MCF 10A (cell line): ENCODE measurements at regions of chr3 and their contacts with region 1.

Region 1: GRCh38 chr3:43769471-43770425 is 79.0 kb downstream of the ABHD5 start:
- DNase-seq: peak; percentile 98
- H3K4me3 Mint-ChIP-seq: peak overlapping the region; percentile 58
- H3K27ac Mint-ChIP-seq: no peak overlapping the region
- H3K4me1 Mint-ChIP-seq: peaks cover 56% of the 10 kb centered on the region
- H3K27me3 Mint-ChIP-seq: no peaks in the 10 kb centered on the region
- CTCF ChIP-seq: peak; percentile 93

Region 2: GRCh38 chr3:43707998-43708397 is 61.8 kb before region 1 on chr3:
- CTCF ChIA-PET with region 1: no interaction called
- POLR2A ChIA-PET with region 1: interaction called, 13 read pairs
- intact Hi-C with region 1: loop called (anchors 5 kb)
- DNase-seq: peak; percentile 95
- H3K4me3 Mint-ChIP-seq: peak overlapping the region; percentile 55
- H3K27ac Mint-ChIP-seq: peak overlapping the region; percentile 81
- H3K4me1 Mint-ChIP-seq: peaks cover 22% of the 10 kb centered on the region
- H3K27me3 Mint-ChIP-seq: no peaks in the 10 kb centered on the region
- CTCF ChIP-seq: no peak

Region 3: GRCh38 chr3:43794776-43795175 is 25.0 kb after region 1 on chr3:
- CTCF ChIA-PET with region 1: interaction called, 5 read pairs
- POLR2A ChIA-PET with region 1: interaction called, 3 read pairs
- intact Hi-C with region 1: loop called (anchors 2 kb)
- DNase-seq: peak; percentile 61
- H3K4me3 Mint-ChIP-seq: no peak overlapping the region
- H3K27ac Mint-ChIP-seq: peak overlapping the region; percentile 7
- H3K4me1 Mint-ChIP-seq: peaks cover 10% of the 10 kb centered on the region
- H3K27me3 Mint-ChIP-seq: no peaks in the 10 kb centered on the region
- CTCF ChIP-seq: no peak

Region 4: GRCh38 chr3:43870120-43870519 is 100.4 kb after region 1 on chr3:
- CTCF ChIA-PET with region 1: interaction called, 4 read pairs
- POLR2A ChIA-PET with region 1: no interaction called
- intact Hi-C with region 1: loop called (anchors 5 kb)
- DNase-seq: peak; percentile 81
- H3K4me3 Mint-ChIP-seq: no peak overlapping the region
- H3K27ac Mint-ChIP-seq: peak overlapping the region; percentile 49
- H3K4me1 Mint-ChIP-seq: peaks cover 66% of the 10 kb centered on the region
- H3K27me3 Mint-ChIP-seq: no peaks in the 10 kb centered on the region
- CTCF ChIP-seq: no peak

Region 5: GRCh38 chr3:43998836-43999727 is 229.3 kb after region 1 on chr3:
- CTCF ChIA-PET with region 1: interaction called, 3 read pairs
- POLR2A ChIA-PET with region 1: no interaction called
- intact Hi-C with region 1: loop called (anchors 1 kb)
- DNase-seq: peak; percentile 69
- H3K4me3 Mint-ChIP-seq: peak overlapping the region; percentile 75
- H3K27ac Mint-ChIP-seq: no peak overlapping the region
- H3K4me1 Mint-ChIP-seq: peaks cover 29% of the 10 kb centered on the region
- H3K27me3 Mint-ChIP-seq: peaks cover 32% of the 10 kb centered on the region
- CTCF ChIP-seq: no peak

Region 6: DNA sequence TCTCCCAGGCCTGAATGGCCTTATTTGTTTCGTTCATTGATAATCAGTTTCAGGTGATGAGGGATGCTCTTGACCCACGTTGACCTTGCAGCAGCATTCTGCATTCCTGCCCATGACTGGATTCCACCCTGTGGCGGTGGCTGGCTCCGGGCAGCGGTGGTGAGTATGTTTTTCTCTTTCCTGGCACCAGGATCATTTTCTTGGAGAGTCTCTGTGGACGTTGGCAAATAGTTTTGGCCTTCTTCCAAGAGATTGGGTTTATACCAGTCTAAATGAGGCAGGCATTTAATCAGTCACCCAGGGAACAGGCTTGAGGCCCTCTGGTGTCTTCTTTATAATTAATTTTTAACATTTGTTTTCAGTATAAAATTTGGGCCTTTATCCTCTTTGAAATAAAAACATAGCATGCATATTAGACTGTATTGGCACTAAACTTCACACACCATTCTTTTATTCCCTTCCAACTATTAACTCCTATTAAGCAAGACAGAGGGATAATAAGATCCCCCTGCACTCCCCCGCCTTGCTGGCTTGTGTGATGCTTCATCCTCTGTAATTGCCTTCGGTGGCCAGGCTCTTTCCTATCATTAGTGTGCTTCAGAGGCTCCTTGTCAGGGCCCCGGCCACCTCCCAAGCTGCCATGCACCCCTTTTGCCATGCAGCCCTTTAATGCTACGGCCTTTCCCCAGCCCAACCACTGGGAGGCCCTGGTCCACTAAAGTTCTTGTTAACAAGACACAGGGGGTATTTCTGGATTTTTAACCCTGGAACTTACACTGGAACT is 295.8 kb after region 1 on chr3:
- CTCF ChIA-PET with region 1: interaction called, 4 read pairs
- POLR2A ChIA-PET with region 1: interaction called, 3 read pairs
- intact Hi-C with region 1: loop called (anchors 5 kb)
- DNase-seq: peak; percentile 96
- H3K4me3 Mint-ChIP-seq: no peak overlapping the region
- H3K27ac Mint-ChIP-seq: no peak overlapping the region
- H3K4me1 Mint-ChIP-seq: peaks cover 24% of the 10 kb centered on the region
- H3K27me3 Mint-ChIP-seq: no peaks in the 10 kb centered on the region
- CTCF ChIP-seq: no peak

Region 7: GRCh38 chr3:44090036-44090435 is 320.3 kb after region 1 on chr3:
- CTCF ChIA-PET with region 1: no interaction called
- POLR2A ChIA-PET with region 1: no interaction called
- intact Hi-C with region 1: no loop called
- DNase-seq: no peak
- H3K4me3 Mint-ChIP-seq: no peak overlapping the region
- H3K27ac Mint-ChIP-seq: no peak overlapping the region
- H3K4me1 Mint-ChIP-seq: peaks cover 9% of the 10 kb centered on the region
- H3K27me3 Mint-ChIP-seq: no peaks in the 10 kb centered on the region
- CTCF ChIP-seq: no peak